Panc1 (cell line): ENCODE measurements at regions of chr6 and their contacts with region 1.

Region 1: DNA sequence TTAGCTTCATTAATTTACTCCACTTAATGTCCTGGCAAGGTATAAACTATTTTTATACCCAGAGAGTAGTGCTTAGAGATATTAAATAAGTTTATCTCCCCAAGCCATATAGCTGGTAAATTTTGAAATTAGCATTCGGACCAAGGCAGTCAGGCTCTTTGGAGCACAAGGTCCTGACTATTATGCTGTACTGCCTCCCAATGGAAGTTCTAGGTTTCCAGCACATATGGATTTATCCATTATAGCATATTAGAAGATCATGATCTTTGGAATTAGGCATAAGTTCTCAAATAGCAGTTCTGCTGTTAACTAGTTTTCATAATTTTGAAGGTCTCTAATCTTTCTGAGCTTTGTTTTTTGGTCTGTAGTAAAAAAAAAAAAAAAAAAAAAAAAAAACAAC is 835.3 kb upstream of the EPHA7 start:
- DNase-seq: no peak
- ATAC-seq: no peak
- H3K4me3 ChIP-seq: no peak overlapping the region
- H3K27ac ChIP-seq: no peak overlapping the region
- H3K4me1 ChIP-seq: no peaks in the 10 kb centered on the region; the same call in 1 of the 2 replicates
- H3K27me3 ChIP-seq: no peaks in the 10 kb centered on the region
- CTCF ChIP-seq: peak; percentile 69; the same call in 1 of the 2 replicates

Region 2: GRCh38 chr6:93751969-93752368 is 502.7 kb before region 1 on chr6:
- CTCF ChIA-PET with region 1: no interaction called
- POLR2A ChIA-PET with region 1: no interaction called
- in situ Hi-C with region 1: no loop called
- intact Hi-C with region 1: loop called (anchors 5 kb)
- DNase-seq: no peak
- ATAC-seq: no peak
- H3K4me3 ChIP-seq: no peak overlapping the region
- H3K27ac ChIP-seq: no peak overlapping the region
- H3K4me1 ChIP-seq: no peaks in the 10 kb centered on the region
- H3K27me3 ChIP-seq: no peaks in the 10 kb centered on the region
- CTCF ChIP-seq: no peak